Caco-2 (cell line): ENCODE measurements at regions of chr13 and their contacts with region 1.

Region 1: DNA sequence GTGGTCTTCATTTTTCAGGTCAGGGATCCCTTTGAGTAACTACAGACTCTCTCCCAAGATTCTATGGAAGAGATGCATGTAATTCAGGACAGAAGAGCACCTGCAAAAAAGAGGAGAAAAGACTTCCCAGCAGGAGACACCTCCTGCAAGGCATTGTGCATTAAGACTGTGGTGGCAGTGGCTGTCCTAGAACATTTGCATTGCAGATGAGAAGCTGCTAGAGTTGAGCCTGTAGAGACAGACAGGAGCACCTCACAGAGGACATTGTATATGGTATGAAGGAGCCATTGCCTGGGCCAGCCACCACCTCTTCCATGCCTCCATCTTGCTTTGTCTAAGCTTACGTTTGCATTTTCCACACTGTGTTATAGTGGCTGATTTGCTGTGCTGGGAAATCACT is 11.2 kb upstream of the MYO16 start:
- DNase-seq: no peak
- H3K4me3 ChIP-seq: no peak overlapping the region
- H3K4me3 Mint-ChIP-seq: no peak overlapping the region
- H3K27ac Mint-ChIP-seq: no peak overlapping the region
- H3K4me1 ChIP-seq: no peaks in the 10 kb centered on the region
- H3K4me1 Mint-ChIP-seq: no peaks in the 10 kb centered on the region
- H3K27me3 ChIP-seq: no peaks in the 10 kb centered on the region
- H3K27me3 Mint-ChIP-seq: no peaks in the 10 kb centered on the region
- CTCF ChIP-seq: no peak

Region 2: GRCh38 chr13:108728370-108728769 is 110.1 kb after region 1 on chr13:
- CTCF ChIA-PET with region 1: no interaction called
- POLR2A ChIA-PET with region 1: no interaction called
- intact Hi-C with region 1: loop called (anchors 5 kb)
- DNase-seq: peak; percentile 41 to 46
- H3K4me3 ChIP-seq: no peak overlapping the region
- H3K4me3 Mint-ChIP-seq: no peak overlapping the region
- H3K27ac Mint-ChIP-seq: no peak overlapping the region
- H3K4me1 ChIP-seq: no peaks in the 10 kb centered on the region
- H3K4me1 Mint-ChIP-seq: no peaks in the 10 kb centered on the region
- H3K27me3 ChIP-seq: no peaks in the 10 kb centered on the region
- H3K27me3 Mint-ChIP-seq: peaks cover 3% of the 10 kb centered on the region
- CTCF ChIP-seq: peak; percentile 38 to 70

Region 3: GRCh38 chr13:108755083-108755482 is 136.8 kb after region 1 on chr13:
- CTCF ChIA-PET with region 1: no interaction called
- POLR2A ChIA-PET with region 1: no interaction called
- intact Hi-C with region 1: no loop called
- DNase-seq: no peak
- H3K4me3 ChIP-seq: no peak overlapping the region
- H3K4me3 Mint-ChIP-seq: no peak overlapping the region
- H3K27ac Mint-ChIP-seq: no peak overlapping the region
- H3K4me1 ChIP-seq: no peaks in the 10 kb centered on the region
- H3K4me1 Mint-ChIP-seq: no peaks in the 10 kb centered on the region
- H3K27me3 ChIP-seq: no peaks in the 10 kb centered on the region
- H3K27me3 Mint-ChIP-seq: no peaks in the 10 kb centered on the region
- CTCF ChIP-seq: no peak